ENCODE measurements at regions of chr3 and their contacts with region 1.

Region 1: GRCh38 chr3:157130467-157131251 is 29.3 kb downstream of the CCNL1 start:
- DNase-seq: peak; percentile 33 to 41
- H3K4me3 ChIP-seq: no peak overlapping the region
- H3K27ac ChIP-seq: peak overlapping the region; percentile 88 to 95 (median 95)
- H3K4me1 ChIP-seq: peaks cover 43 to 67% of the 10 kb centered on the region in 2 donors
- H3K27me3 ChIP-seq: no peaks in the 10 kb centered on the region
- CTCF ChIP-seq: peak; percentile 28 to 66 (median 53)
- POLR2A ChIP-seq: no peak

Region 2: GRCh38 chr3:156535162-156535627 is 595.5 kb before region 1 on chr3:
- intact Hi-C with region 1: loop called (anchors 10 kb)
- DNase-seq: peak; percentile 63 to 64
- H3K4me3 ChIP-seq: no peak overlapping the region
- H3K27ac ChIP-seq: peak overlapping the region; percentile 54 to 90 (median 57)
- H3K4me1 ChIP-seq: peaks cover 9 to 16% of the 10 kb centered on the region in 2 donors
- H3K27me3 ChIP-seq: no peaks in the 10 kb centered on the region
- CTCF ChIP-seq: peak in 4 of 6 experiments; percentile 27 to 47 (median 44)
- POLR2A ChIP-seq: no peak

Region 3: GRCh38 chr3:156674046-156674910 is 456.4 kb before region 1 on chr3 and contains the start of gene TIPARP:
- intact Hi-C with region 1: loop called (anchors 5 kb)
- DNase-seq: peak; percentile 100
- H3K4me3 ChIP-seq: peak within 1 kb of the TSS; percentile 55 to 95 (median 84)
- H3K27ac ChIP-seq: peak within 1 kb of the TSS; percentile 92 to 97 (median 97)
- H3K4me1 ChIP-seq: peaks cover 14 to 25% of the 10 kb centered on the region in 2 donors
- H3K27me3 ChIP-seq: no peaks in the 10 kb centered on the region
- CTCF ChIP-seq: peak in 5 of 6 experiments; percentile 65 to 93 (median 81)
- POLR2A ChIP-seq: peak; percentile 94 to 100
- total RNA-seq, gene TIPARP: 23.3 to 65.0 (median 31.2) TPM

Region 4: DNA sequence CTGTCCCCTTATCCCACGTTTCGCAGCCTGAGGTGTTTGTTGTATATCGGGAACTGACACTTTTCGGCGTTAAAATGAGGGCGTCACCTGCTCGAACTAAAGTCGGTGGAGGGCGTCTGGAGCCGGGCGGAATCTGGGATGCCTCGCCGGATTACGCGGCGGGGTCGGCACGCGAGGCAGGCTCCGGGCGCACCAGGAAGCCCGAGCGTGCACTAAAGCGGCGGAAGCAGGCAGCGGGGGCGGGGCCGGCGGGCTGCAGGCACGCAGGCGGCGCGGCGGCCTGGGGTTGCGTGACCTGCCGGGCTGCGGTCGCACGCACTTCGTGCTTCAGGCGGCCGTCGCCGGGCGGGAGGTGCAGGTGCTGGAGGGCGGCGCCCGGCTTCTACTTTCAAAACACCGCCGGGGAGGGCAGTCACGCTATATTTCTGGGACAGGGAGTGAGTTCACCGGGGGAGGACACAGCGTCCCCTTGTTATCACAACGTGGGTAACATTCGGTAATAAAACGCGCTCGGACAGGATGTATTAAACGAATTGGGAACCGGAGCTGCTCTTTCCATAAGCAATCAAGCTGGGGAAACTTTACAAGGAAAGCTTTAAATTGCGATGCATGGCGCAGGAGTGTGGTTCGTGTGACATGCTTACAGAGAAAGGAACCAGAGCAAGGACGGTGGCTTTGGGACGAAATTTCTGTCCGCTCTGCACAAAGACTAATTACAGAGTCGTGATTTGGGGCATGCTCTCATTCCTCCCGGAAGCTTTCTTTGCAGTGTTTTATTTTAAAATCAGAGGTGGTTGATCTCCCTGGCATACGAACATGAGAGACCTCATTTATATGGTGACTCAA is 313.6 kb before region 1 on chr3:
- intact Hi-C with region 1: loop called (anchors 10 kb)
- DNase-seq: peak; percentile 84 to 85
- H3K4me3 ChIP-seq: peak overlapping the region; percentile 60 to 76 (median 63)
- H3K27ac ChIP-seq: peak overlapping the region; percentile 69 to 77 (median 77)
- H3K4me1 ChIP-seq: peaks cover 3 to 11% of the 10 kb centered on the region in 2 donors
- H3K27me3 ChIP-seq: no peaks in the 10 kb centered on the region
- CTCF ChIP-seq: no peak
- POLR2A ChIP-seq: peak in 1 of 2 donors; percentile 82

Region 5: GRCh38 chr3:157089455-157090221 is 41.0 kb before region 1 on chr3:
- intact Hi-C with region 1: loop called (anchors 5 kb)
- DNase-seq: peak; percentile 73 to 74
- H3K4me3 ChIP-seq: no peak overlapping the region
- H3K27ac ChIP-seq: peak overlapping the region; percentile 99 to 100 (median 100)
- H3K4me1 ChIP-seq: peaks cover 40 to 53% of the 10 kb centered on the region in 2 donors
- H3K27me3 ChIP-seq: no peaks in the 10 kb centered on the region
- CTCF ChIP-seq: no peak
- POLR2A ChIP-seq: peak in 1 of 2 donors; percentile 50

Measured in thyroid gland (tissue), 4 donors.